GM13976 (cell line): ENCODE measurements at regions of chr11 and their contacts with region 1.

Region 1: GRCh38 chr11:72793425-72794367 is at the start of gene STARD10:
- DNase-seq: peak; percentile 98
- CTCF ChIP-seq: peak; percentile 74

Region 2: DNA sequence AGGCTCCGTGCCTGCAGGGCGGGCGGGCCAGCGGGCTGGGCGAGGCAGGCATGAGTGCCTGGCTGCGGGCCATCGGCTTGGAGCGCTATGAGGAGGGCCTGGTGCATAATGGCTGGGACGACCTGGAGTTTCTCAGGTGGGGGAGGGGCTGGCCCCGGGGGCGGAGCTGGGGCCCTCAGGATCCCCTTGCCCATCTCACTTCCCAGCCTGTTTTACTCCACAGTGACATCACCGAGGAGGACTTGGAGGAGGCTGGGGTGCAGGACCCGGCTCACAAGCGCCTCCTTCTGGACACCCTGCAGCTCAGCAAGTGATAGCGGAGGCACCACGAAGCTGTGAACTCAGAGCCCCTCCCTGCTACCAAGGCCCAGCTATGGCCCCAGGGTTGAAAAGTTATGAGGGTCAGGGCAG is 555.7 kb before region 1 on chr11:
- in situ Hi-C with region 1: no loop called
- DNase-seq: peak; percentile 89
- CTCF ChIP-seq: peak; percentile 68

Region 3: GRCh38 chr11:72722050-72722748 is 71.5 kb before region 1 on chr11:
- in situ Hi-C with region 1: loop called (anchors 10 kb)
- DNase-seq: peak; percentile 94
- CTCF ChIP-seq: no peak